ENCODE measurements at regions of chr1 and their contacts with region 1.

Region 1: DNA sequence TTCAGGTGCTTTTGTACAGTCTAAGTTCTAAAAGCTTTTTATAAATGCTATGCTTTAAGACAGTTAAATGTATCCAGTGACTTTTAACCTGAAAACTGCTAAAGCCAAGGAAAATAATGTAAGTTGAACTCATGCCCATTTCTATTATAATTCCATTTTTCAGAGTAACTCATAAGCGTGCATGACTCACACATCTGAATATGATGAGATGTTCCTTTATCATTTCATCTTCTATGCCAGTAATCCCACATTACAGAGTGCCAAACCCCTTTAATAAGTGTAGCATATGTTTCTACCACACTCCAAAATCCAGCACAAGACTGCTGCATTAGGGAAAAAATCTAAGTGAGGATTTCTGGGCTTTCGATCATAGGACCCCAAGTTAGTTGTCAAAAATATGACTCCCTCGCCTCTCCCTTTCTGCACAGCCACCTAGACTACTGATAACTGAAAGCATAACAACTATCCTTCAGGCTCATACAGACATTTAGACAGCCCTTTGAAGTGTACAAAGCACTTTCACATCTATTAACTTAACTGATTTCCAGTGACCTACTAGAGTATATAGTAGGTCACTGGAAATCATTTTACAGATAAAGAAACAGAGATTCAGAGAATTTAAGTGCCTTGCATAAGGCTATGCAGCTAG is 45.3 kb downstream of the JAK1 start:
- DNase-seq: no peak
- ATAC-seq: no peak
- H3K4me3 ChIP-seq: no peak overlapping the region
- H3K4me3 Mint-ChIP-seq: no peak overlapping the region
- H3K27ac ChIP-seq: peak overlapping the region in 1 of 2 donors; percentile 46
- H3K27ac Mint-ChIP-seq: no peak overlapping the region
- H3K4me1 ChIP-seq: peaks cover 66 to 70% of the 10 kb centered on the region in 2 donors
- H3K4me1 Mint-ChIP-seq: peaks cover 94% of the 10 kb centered on the region
- H3K27me3 ChIP-seq: no peaks in the 10 kb centered on the region
- H3K27me3 Mint-ChIP-seq: no peaks in the 10 kb centered on the region
- CTCF ChIP-seq: no peak

Region 2: GRCh38 chr1:64898107-64898845 is 22.8 kb before region 1 on chr1:
- CTCF ChIA-PET with region 1: no interaction called
- POLR2A ChIA-PET with region 1: no interaction called
- intact Hi-C with region 1: loop called (anchors 2 kb)
- DNase-seq: peak; percentile 25
- ATAC-seq: peak; percentile 53
- H3K4me3 ChIP-seq: peak overlapping the region in 1 of 5 experiments; percentile 10
- H3K4me3 Mint-ChIP-seq: peak overlapping the region; percentile 43
- H3K27ac ChIP-seq: peak overlapping the region in 1 of 2 donors; percentile 20
- H3K27ac Mint-ChIP-seq: peak overlapping the region; percentile 47
- H3K4me1 ChIP-seq: peaks cover 76 to 80% of the 10 kb centered on the region in 2 donors
- H3K4me1 Mint-ChIP-seq: peaks cover 90% of the 10 kb centered on the region
- H3K27me3 ChIP-seq: no peaks in the 10 kb centered on the region
- H3K27me3 Mint-ChIP-seq: no peaks in the 10 kb centered on the region
- CTCF ChIP-seq: no peak